Esophagus muscularis mucosa (tissue), 4 donors: ENCODE measurements at regions of chr2 and their contacts with region 1.

Region 1: DNA sequence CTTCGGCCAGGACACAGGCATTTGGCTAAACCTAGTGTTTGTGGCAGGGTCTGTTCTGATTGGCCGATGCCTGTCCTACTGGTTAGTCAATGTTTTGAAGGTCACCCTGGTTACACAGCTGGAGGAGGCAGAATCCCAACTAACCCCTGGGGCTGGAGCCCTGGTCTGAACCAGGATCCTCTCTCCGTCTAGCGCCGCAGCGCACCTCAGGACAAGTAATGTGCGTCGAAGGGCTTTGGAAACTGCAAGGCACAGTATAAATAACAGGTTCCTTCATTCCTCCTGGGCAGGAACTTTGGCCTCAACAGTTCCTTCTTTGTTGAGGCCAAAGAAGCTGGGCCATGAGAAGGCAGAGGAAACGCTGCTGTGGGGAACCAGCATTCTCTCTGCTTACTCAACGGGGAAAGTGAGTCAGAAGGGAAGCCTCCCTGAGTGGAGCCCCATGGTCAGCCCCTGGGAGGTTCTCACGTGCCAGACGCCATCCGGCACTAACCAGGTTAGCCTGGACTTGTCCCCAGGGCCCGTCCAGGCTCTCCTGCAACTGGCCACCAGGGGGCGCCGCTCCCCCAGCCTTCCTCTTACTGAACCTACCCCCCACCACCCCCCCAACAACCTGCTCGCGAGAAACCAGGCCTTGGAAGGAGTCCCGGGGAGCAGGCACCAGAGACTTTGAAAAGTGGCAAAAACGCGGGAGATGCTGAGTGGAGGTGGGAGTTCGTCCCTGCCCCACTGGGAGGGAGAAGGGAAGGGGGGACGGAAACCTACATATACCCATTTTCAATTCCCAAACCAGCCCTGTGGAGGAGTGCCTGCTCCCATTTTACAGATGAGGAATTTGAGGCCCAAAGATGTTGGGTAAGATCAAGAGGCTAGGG is 19.8 kb downstream of the TEX44 start:
- DNase-seq: peak; percentile 98
- H3K4me3 ChIP-seq: peak overlapping the region in 1 of 4 donors; percentile 24
- H3K27ac ChIP-seq: peak overlapping the region; percentile 97 to 100 (median 98)
- H3K4me1 ChIP-seq: peaks cover 49 to 65% (median 53%) of the 10 kb centered on the region in 4 donors
- H3K27me3 ChIP-seq: no peaks in the 10 kb centered on the region
- CTCF ChIP-seq: peak; percentile 98 to 99 (median 98)
- EP300 ChIP-seq: no peak
- POLR2A ChIP-seq: no peak

Region 2: DNA sequence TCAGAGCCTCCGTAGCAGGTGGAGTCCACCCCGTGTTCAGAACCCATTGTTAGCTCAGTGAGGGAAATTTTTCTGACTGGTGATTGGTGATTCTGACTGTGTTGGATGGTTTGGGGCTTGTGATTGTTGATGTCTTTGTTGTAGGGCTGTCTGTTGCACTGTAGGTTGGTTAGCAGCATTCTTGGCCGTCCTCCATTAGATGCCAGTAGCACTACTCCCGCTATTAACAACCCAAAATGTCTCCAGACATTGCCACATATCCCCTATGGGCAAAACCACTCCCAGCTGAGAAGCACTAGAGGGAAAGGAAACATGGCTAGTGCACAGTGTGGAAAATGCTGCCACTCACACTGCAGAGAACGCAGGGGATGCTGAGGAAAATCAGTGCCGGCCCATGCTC is 362.3 kb before region 1 on chr2:
- intact Hi-C with region 1: no loop called
- DNase-seq: no peak
- H3K4me3 ChIP-seq: no peak overlapping the region
- H3K27ac ChIP-seq: no peak overlapping the region
- H3K4me1 ChIP-seq: peaks cover 0 to 4% (median 0%) of the 10 kb centered on the region in 4 donors
- H3K27me3 ChIP-seq: no peaks in the 10 kb centered on the region
- CTCF ChIP-seq: no peak
- EP300 ChIP-seq: no peak
- POLR2A ChIP-seq: no peak

Region 3: GRCh38 chr2:231674587-231675338 is 62.3 kb after region 1 on chr2:
- intact Hi-C with region 1: loop called (anchors 2 kb)
- DNase-seq: no peak
- H3K4me3 ChIP-seq: no peak overlapping the region
- H3K27ac ChIP-seq: peak overlapping the region; percentile 82 to 94 (median 88)
- H3K4me1 ChIP-seq: peaks cover 57 to 66% (median 61%) of the 10 kb centered on the region in 4 donors
- H3K27me3 ChIP-seq: no peaks in the 10 kb centered on the region
- CTCF ChIP-seq: peak; percentile 82 to 94 (median 94)
- EP300 ChIP-seq: no peak
- POLR2A ChIP-seq: no peak